CD4-positive, alpha-beta T cell (primary cell): ENCODE measurements at regions of chr11 and their contacts with region 1.

Region 1: DNA sequence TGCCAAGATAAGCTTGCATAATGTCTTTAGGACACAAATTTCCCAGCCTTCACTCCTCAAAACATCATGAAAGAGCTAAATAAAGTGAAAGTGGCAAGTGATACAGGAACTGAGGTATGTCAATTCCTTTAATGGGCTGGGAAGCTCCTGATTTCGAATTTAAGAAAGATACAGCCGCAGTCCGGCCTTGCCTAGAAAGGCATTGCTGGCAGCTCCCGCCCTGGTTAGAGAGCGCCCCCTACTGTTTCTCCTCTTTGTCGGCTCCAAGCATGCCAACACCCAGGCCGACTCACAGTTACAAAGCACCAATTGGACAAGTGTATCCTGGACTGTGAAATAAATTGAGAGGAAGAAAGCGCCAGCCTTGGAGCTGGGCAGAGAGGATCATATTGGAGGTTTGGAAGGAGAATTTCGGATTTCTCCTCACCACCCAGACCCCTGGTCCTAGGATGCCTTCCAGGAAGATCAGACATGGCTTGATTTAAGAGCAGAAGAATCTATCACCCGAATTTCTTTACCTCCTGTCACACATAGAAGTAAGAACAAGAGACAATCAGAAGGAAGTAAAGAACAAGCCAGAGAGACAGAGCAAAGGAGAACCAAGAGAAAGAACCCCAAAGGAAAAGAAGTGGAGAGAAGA is 84.0 kb downstream of the FAM76B start:
- DNase-seq: peak; percentile 76 to 93 (median 85)
- ATAC-seq: peak; percentile 92
- H3K4me3 ChIP-seq: no peak overlapping the region
- H3K4me3 Mint-ChIP-seq: no peak overlapping the region
- H3K27ac ChIP-seq: peak overlapping the region; percentile 33 to 54
- H3K27ac Mint-ChIP-seq: no peak overlapping the region
- H3K4me1 ChIP-seq: peaks cover 33% of the 10 kb centered on the region
- H3K4me1 Mint-ChIP-seq: peaks cover 11% of the 10 kb centered on the region
- H3K27me3 ChIP-seq: no peaks in the 10 kb centered on the region
- H3K27me3 Mint-ChIP-seq: no peaks in the 10 kb centered on the region
- CTCF ChIP-seq: peak; percentile 94

Region 2: GRCh38 chr11:95076416-95076815 is 629.2 kb before region 1 on chr11:
- CTCF ChIA-PET with region 1: no interaction called
- POLR2A ChIA-PET with region 1: no interaction called
- intact Hi-C with region 1: loop called in 1 of 2 experiments (anchors 10 kb)
- DNase-seq: no peak
- ATAC-seq: no peak
- H3K4me3 ChIP-seq: no peak overlapping the region
- H3K4me3 Mint-ChIP-seq: no peak overlapping the region
- H3K27ac ChIP-seq: no peak overlapping the region
- H3K27ac Mint-ChIP-seq: no peak overlapping the region
- H3K4me1 ChIP-seq: no peaks in the 10 kb centered on the region
- H3K4me1 Mint-ChIP-seq: peaks cover 5% of the 10 kb centered on the region
- H3K27me3 ChIP-seq: no peaks in the 10 kb centered on the region
- H3K27me3 Mint-ChIP-seq: no peaks in the 10 kb centered on the region
- CTCF ChIP-seq: no peak

Region 3: GRCh38 chr11:95266751-95267374 is 438.7 kb before region 1 on chr11:
- CTCF ChIA-PET with region 1: no interaction called
- POLR2A ChIA-PET with region 1: no interaction called
- intact Hi-C with region 1: no loop called
- DNase-seq: no peak
- ATAC-seq: no peak
- H3K4me3 ChIP-seq: no peak overlapping the region
- H3K4me3 Mint-ChIP-seq: no peak overlapping the region
- H3K27ac ChIP-seq: no peak overlapping the region
- H3K27ac Mint-ChIP-seq: no peak overlapping the region
- H3K4me1 ChIP-seq: no peaks in the 10 kb centered on the region
- H3K4me1 Mint-ChIP-seq: peaks cover 11% of the 10 kb centered on the region
- H3K27me3 ChIP-seq: no peaks in the 10 kb centered on the region
- H3K27me3 Mint-ChIP-seq: no peaks in the 10 kb centered on the region
- CTCF ChIP-seq: no peak

Region 4: DNA sequence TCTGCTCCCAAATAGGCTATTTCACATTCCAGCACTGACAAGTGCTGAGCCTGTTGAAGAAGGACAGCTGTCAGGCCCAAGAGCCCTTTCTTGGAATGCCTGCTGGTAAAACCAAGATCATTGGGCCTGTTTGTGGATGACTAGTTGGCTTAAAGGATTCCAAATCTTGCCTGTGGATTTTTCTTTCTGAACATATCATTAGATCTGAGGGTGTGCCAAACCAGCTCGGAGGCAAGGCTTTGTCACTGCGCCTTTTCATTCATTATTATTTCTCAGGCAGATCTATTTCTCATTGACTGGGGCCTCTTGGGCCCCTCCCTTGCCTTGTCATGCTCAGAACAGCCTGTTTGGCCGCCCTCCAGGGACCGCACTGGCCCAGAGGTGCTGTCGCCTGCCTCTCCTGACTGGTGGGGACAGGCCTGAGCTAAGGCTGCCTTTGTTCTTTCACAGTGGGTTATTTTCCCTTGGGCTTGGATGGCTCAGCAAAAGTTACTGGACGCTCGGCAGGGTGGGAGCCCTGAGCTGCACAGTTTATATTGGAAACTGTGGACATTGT is 251.9 kb before region 1 on chr11:
- CTCF ChIA-PET with region 1: no interaction called
- POLR2A ChIA-PET with region 1: no interaction called
- intact Hi-C with region 1: no loop called
- DNase-seq: no peak
- ATAC-seq: no peak
- H3K4me3 ChIP-seq: no peak overlapping the region
- H3K4me3 Mint-ChIP-seq: no peak overlapping the region
- H3K27ac ChIP-seq: no peak overlapping the region
- H3K27ac Mint-ChIP-seq: no peak overlapping the region
- H3K4me1 ChIP-seq: no peaks in the 10 kb centered on the region
- H3K4me1 Mint-ChIP-seq: no peaks in the 10 kb centered on the region
- H3K27me3 ChIP-seq: no peaks in the 10 kb centered on the region
- H3K27me3 Mint-ChIP-seq: no peaks in the 10 kb centered on the region
- CTCF ChIP-seq: no peak

Region 5: DNA sequence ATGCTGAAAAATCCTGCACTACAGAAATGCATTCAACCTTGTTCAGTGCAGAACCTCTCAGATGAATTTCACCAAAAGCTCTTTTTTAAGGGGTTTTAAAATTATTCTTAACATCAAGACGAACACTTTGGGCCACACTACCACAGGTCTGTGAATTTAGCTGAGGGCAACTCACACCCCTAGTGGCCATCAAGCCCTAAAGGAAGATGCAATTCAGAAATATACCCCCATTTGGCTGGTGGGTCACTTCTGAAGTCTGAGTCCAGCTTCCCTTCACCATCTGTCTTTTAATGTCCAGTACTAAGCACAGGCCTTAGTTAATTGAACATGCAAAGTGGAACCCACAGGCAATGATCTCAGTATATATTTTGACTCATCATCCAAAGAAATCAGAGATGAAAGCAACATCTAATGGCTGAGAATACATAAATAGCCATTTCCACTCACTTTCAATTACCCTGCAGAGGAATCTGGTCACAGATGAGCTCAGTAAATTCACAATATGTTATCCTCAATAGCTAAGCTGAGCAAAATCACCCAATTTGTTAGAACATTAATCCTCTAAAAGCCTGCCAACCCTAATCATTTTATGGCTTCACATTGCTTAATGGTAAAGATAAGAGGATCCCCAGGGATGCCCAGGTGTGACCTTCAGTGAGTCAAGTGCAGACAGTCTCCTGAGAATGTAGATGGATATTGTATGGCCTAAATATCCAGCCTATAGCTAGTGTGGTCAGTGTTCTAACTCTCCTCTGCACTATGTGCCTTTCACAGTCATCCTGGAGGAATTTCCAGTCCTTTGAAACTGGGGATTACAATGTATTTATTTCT is 33.7 kb after region 1 on chr11:
- CTCF ChIA-PET with region 1: no interaction called
- POLR2A ChIA-PET with region 1: no interaction called
- intact Hi-C with region 1: no loop called
- DNase-seq: no peak
- ATAC-seq: no peak
- H3K4me3 ChIP-seq: no peak overlapping the region
- H3K4me3 Mint-ChIP-seq: no peak overlapping the region
- H3K27ac ChIP-seq: no peak overlapping the region
- H3K27ac Mint-ChIP-seq: no peak overlapping the region
- H3K4me1 ChIP-seq: peaks cover under 1% of the 10 kb centered on the region
- H3K4me1 Mint-ChIP-seq: peaks cover 4% of the 10 kb centered on the region
- H3K27me3 ChIP-seq: no peaks in the 10 kb centered on the region
- H3K27me3 Mint-ChIP-seq: no peaks in the 10 kb centered on the region
- CTCF ChIP-seq: no peak